Activated T-helper 2 cell treated with anti-CD3 and anti-CD28 coated beads, Interferon-gamma antibody, Interleukin-2, Interleukin-4, amounts not matched to agents 10 μg/mL and 5 μg/mL and 100 μg/mL, durations not matched to agents 14 hours and 24 hours and 36 hours (primary cell): ENCODE measurements at regions of chr21 and their contacts with region 1.

Region 1: GRCh38 chr21:33947451-33948095 is 32.0 kb upstream of the ATP5PO start:
- DNase-seq: peak; percentile 83
- H3K4me3 Mint-ChIP-seq: peak overlapping the region; percentile 71
- H3K27ac Mint-ChIP-seq: peak overlapping the region; percentile 100
- H3K4me1 Mint-ChIP-seq: peaks cover 65% of the 10 kb centered on the region
- H3K27me3 Mint-ChIP-seq: no peaks in the 10 kb centered on the region

Region 2: GRCh38 chr21:33682992-33683627 is 264.5 kb before region 1 on chr21:
- intact Hi-C with region 1: no loop called
- DNase-seq: no peak
- H3K4me3 Mint-ChIP-seq: no peak overlapping the region
- H3K27ac Mint-ChIP-seq: no peak overlapping the region
- H3K4me1 Mint-ChIP-seq: no peaks in the 10 kb centered on the region
- H3K27me3 Mint-ChIP-seq: peaks cover 9% of the 10 kb centered on the region

Region 3: DNA sequence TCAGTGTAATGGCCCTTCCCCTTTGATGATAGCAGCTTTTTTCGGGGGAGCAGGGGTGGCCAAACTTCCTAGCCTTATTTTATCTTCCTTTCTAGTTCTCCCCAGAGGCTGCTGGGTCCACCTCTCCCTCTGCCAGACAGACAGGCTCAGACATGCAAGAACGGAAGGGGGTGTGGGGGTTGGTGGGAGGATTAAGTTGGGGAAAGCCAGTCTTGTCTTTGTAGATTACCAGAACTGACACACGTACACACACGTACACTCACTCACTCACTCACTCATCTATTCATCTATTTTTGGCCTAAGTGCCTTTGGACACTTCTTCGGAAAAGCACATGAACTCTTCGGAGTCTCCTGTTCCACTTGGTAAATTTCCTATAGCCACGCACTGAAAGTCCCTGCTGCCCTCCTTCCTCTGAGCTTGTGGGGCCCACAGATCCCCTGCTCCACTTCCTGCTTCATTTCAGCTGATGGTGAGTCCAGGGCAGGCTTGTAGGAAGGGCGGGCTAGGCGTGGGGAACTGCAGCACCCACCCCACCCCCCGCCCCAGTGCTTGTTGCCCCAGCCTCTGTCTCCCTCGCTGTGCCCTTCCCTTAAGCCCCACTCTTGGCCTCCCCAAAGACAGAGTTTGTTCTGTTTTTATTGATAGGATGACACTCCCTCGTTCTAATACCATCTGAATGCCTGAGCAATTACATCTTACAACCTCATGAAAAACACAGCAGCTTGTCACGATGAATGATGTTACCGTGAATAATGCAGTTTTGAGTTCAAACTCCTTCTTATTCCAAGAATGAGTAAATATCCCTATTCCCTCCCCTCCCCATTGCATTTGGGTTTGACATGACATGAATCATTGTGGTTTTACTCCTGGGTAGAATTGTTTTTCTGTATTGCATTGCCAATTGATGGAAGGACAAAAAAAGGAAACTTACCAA is 28.8 kb after region 1 on chr21:
- intact Hi-C with region 1: loop called (anchors 1 kb)
- DNase-seq: peak; percentile 32
- H3K4me3 Mint-ChIP-seq: peak overlapping the region; percentile 72
- H3K27ac Mint-ChIP-seq: peak overlapping the region; percentile 99
- H3K4me1 Mint-ChIP-seq: peaks cover 68% of the 10 kb centered on the region
- H3K27me3 Mint-ChIP-seq: no peaks in the 10 kb centered on the region

Region 4: DNA sequence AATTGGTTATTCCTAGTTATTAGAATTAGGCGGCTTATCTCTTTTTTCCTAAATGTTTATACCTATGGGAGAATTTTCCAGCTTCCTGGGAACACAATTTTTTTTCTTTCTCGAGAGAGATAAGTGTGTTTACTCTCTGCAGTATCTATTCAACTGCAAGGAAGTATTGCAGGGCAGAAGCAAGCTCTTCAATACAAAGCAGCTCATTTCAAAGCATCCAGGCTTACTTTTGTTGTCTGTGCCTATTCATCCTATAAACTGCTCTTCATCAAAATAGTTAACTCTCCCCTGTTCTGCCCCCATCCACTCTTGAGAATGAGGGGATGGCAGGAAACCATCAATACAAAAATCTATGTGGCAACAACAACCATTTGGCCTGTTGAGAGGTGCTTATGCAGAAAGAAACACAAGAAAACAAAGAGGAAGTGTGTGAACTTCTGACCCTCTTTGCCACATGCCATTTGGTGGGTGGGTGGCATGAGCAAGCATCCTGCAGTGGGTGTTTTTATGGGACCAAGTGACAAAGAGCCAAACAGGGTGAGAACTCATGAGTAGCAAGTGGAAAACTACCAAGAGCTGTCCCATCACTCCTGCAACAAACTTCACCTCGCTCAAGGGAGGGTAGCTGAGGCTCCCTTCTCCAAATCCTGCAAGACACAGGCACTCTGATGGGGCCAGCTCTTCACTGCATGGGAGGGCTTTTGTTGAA is 75.2 kb after region 1 on chr21:
- intact Hi-C with region 1: loop called (anchors 2 kb)
- DNase-seq: no peak
- H3K4me3 Mint-ChIP-seq: no peak overlapping the region
- H3K27ac Mint-ChIP-seq: no peak overlapping the region
- H3K4me1 Mint-ChIP-seq: peaks cover 25% of the 10 kb centered on the region
- H3K27me3 Mint-ChIP-seq: no peaks in the 10 kb centered on the region

Region 5: DNA sequence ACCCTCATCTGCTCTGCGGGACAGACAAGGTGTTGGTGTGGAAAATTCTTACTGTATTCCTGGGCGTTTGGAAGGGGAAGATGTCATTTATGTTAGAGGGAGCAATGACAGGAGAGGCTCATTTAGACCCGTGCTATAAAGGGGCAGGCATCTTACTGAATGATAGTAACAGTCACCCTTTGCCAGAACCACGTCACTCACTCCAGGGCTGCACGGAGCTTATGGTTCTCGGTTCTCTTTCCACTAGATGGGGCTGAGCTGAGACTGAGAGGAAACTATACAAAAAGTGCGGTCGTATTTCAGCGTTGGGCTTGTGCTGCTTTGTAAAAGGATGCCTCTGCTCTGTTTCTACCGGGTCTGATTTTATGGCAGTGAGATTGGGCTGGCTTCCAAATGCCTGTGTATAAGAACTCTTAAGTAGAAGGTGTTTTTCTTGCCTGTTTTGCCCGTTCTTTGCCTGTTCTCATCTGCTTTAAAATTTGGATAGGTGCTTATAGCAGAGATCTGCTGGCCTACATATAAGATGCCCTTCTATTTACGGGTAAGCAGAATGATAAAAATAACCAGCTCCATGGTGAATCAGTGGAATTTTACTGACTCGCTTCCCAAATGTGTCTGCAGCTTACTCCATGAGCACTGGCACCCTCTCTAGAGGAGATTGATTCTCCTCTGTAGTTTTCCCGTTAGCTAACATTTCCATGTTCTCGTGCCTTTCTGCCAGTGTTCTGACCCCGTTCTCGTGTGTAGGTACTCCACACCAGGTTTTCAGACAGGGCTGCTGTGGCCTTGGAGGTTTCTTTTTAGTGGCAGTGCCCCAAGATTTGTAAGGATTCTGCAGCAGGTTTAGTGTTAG is 181.7 kb after region 1 on chr21:
- intact Hi-C with region 1: loop called (anchors 1 kb)
- DNase-seq: peak; percentile 71
- H3K4me3 Mint-ChIP-seq: peak overlapping the region; percentile 64
- H3K27ac Mint-ChIP-seq: peak overlapping the region; percentile 94
- H3K4me1 Mint-ChIP-seq: peaks cover 70% of the 10 kb centered on the region
- H3K27me3 Mint-ChIP-seq: no peaks in the 10 kb centered on the region